Right cardiac atrium (tissue), 5 donors: ENCODE measurements at regions of chr11 and their contacts with region 1.

Region 1: DNA sequence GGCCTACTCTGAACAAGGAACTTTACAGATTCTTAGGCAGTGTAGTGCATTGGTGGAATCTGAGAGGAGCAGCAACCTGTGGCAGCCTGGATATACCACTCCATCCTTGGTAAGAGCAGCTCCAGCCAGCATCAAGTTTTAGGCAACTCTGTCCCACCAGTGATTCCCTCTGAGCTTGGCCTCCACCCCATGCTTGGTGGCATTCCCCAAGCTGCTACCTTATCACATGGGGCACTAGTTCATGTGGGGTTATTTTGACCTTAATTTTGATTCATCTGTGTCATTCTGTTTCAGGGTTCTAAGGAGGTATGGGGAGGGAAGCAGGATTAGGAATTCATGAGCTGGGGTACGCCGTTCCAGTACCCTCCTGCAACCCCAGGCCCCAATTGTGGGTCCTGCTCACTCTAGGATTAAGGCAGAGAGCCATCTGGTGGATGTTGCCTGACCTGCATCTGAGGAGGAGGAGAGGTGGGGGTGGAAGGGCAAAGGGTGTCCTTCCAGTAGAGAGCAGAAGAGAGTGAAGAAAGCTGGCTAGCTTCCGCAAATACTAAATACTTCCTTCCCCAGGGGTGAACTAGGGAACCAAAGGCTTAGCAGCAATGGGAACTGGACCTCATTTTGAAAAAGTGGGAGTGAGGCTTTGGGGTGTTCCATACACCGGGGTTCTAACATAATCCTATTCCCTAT is 10.5 kb downstream of the LRRC51 start:
- DNase-seq: peak; percentile 69 to 84 (median 76)
- ATAC-seq: peak; percentile 89
- H3K4me3 ChIP-seq: no peak overlapping the region
- H3K27ac ChIP-seq: no peak overlapping the region
- H3K4me1 ChIP-seq: no peaks in the 10 kb centered on the region
- H3K27me3 ChIP-seq: no peaks in the 10 kb centered on the region

Region 2: DNA sequence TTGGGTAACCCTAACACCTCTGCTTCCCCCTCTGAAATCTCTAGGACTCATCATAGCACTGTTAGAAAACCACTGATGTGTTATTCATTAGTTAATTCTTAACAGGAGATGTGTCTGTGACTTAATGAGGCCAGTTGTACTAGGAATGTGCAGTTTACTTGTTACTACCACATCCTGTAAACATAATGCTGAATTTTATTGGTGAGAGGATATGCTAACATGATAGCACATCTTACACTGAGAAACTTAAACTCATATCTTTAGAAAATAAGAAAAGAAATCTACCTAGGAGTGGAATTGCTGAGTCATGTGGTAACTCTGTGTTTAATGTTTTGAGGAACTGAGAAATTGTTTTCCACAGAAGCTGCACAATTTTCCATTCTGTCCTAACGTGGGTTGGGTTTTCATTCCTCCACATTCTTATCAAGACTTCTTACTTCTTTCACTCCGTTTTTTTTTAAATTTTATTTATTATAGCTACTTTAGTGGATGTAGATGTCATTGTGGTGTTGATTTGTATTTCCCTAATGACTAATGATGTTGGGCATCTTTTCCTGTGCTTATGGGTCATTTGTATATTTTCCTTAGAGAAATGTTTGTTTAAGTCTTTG is 128.6 kb before region 1 on chr11:
- intact Hi-C with region 1: no loop called
- DNase-seq: no peak
- ATAC-seq: no peak
- H3K4me3 ChIP-seq: no peak overlapping the region
- H3K27ac ChIP-seq: no peak overlapping the region
- H3K4me1 ChIP-seq: no peaks in the 10 kb centered on the region
- H3K27me3 ChIP-seq: no peaks in the 10 kb centered on the region

Region 3: GRCh38 chr11:72026090-72026489 is 65.1 kb before region 1 on chr11:
- intact Hi-C with region 1: loop called (anchors 2 to 5 kb)
- DNase-seq: no peak
- ATAC-seq: no peak
- H3K4me3 ChIP-seq: no peak overlapping the region
- H3K27ac ChIP-seq: no peak overlapping the region
- H3K4me1 ChIP-seq: peaks cover 4% of the 10 kb centered on the region
- H3K27me3 ChIP-seq: no peaks in the 10 kb centered on the region